T-cell (primary cell): ENCODE measurements at regions of chr10 and their contacts with region 1.

Region 1: DNA sequence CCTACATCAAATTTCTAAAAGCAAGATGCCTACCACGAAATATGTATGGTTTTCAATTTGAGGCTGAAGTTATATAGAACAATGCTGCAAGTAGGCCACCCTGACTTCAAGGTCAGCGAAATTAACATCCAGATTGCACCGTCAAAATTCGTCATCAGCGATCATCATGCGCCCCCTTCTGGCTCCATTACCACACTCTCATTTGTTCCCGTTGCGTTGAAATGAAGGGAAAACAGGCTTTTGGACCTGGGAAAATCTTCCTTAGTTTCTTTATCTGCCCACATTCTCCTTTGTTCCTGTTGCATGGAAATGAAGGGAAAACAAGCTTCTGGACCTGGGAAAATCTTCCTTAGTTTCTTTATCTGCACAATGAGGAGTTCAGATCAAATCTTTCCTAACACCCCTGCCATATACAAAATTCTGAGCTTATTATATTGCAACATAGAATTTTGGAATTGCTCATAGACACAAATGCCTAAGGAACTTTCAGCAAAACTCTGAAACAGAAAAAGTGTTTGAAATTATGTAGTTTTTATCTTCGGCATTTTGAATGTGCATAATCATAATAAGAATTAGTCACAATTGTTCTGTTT is 98.2 kb upstream of the PRKCQ start:
- DNase-seq: peak in 34 of 35 experiments; percentile 6 to 82 (median 45)
- ATAC-seq: peak; percentile 59 to 65 (median 62)
- H3K4me3 ChIP-seq: no peak overlapping the region
- H3K4me3 Mint-ChIP-seq: no peak overlapping the region
- H3K27ac ChIP-seq: no peak overlapping the region
- H3K27ac Mint-ChIP-seq: no peak overlapping the region
- H3K4me1 ChIP-seq: no peaks in the 10 kb centered on the region
- H3K4me1 Mint-ChIP-seq: peaks cover 0 to 6% (median 4%) of the 10 kb centered on the region in 3 donors
- H3K27me3 ChIP-seq: no peaks in the 10 kb centered on the region
- H3K27me3 Mint-ChIP-seq: peaks cover 0 to 11% of the 10 kb centered on the region in 2 donors

Region 2: GRCh38 chr10:6416892-6417512 is 261.3 kb before region 1 on chr10:
- CTCF ChIA-PET with region 1: interaction called, 5 to 10 read pairs
- POLR2A ChIA-PET with region 1: no interaction called
- DNase-seq: peak in 2 of 35 experiments; percentile 37 to 76
- ATAC-seq: peak in 3 of 4 experiments; percentile 61 to 78 (median 64)
- H3K4me3 ChIP-seq: no peak overlapping the region
- H3K4me3 Mint-ChIP-seq: no peak overlapping the region
- H3K27ac ChIP-seq: no peak overlapping the region
- H3K27ac Mint-ChIP-seq: no peak overlapping the region
- H3K4me1 ChIP-seq: no peaks in the 10 kb centered on the region
- H3K4me1 Mint-ChIP-seq: peaks cover 0 to under 1% (median 0%) of the 10 kb centered on the region in 3 donors
- H3K27me3 ChIP-seq: no peaks in the 10 kb centered on the region
- H3K27me3 Mint-ChIP-seq: no peaks in the 10 kb centered on the region